ENCODE measurements at regions of chr6 and their contacts with region 1.

Region 1: GRCh38 chr6:99270826-99271225 is 78.6 kb downstream of the FAXC start:
- DNase-seq: no peak

Region 2: GRCh38 chr6:99236010-99236409 is 34.8 kb before region 1 on chr6:
- in situ Hi-C with region 1: loop called (anchors 5 kb)
- DNase-seq: no peak

Region 3: GRCh38 chr6:99425647-99426453 is 155.0 kb after region 1 on chr6:
- in situ Hi-C with region 1: no loop called
- DNase-seq: peak; percentile 83

Measured in G401 (cell line).